Head of caudate nucleus (tissue), 42 donors: ENCODE measurements at regions of chr2 and their contacts with region 1.

Region 1: GRCh38 chr2:189661148-189661956 is at the start of gene ASNSD1:
- DNase-seq: peak; percentile 86 to 97 (median 94)

Region 2: DNA sequence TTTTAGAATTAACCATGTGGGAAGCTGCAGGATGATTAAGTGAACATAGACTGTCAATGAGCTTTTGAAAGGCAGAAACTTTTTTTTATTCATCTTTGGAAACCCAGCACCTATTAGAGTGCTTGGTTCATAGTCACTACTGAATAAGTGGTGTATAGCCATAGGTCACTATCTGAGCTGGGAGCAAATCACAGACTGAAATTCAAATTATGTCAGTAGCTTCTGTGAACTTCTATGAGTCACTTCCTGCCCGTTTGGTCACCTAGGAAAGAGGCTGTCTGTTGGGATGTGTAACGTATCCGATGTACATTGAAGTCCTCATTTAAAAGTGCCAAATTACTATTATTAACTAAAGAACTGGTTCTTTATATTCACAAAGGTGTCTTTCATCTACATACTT is 60.3 kb before region 1 on chr2:
- intact Hi-C with region 1: no loop called
- DNase-seq: no peak

Region 3: DNA sequence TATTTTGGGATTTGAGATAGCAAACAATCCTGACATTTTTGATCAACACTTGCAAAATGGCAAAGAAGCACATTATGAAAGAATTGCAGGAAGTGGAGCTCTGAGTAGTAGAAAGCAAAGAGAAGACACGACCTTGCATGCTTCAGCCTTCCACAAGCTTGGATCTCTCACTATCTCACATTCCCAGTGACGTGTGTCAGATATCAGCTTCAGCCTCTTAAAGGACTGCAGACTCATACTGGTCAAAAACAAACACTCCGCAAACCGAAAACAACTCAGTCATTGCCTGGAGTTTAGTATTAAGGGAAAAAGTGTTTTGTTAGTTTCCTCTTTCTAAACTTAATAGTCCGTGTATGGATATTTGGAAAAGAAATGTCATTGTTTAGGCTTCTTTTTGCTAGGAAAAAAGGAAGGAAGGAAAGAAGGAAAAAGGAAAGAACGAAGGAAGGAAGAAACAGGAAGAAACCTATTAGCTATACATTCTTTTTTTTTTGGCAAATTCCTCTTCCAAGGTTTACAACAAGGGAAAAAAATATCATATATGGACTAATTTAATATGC is 48.2 kb before region 1 on chr2:
- intact Hi-C with region 1: no loop called
- DNase-seq: no peak

Region 4: GRCh38 chr2:189698020-189698887 is 36.9 kb after region 1 on chr2:
- intact Hi-C with region 1: loop called (anchors 2 kb)
- DNase-seq: peak in 18 of 42 donors; percentile 4 to 78 (median 36)

Region 5: GRCh38 chr2:189762551-189763298 is 101.4 kb after region 1 on chr2 and contains the start of gene OSGEPL1:
- intact Hi-C with region 1: loop called (anchors 5 kb)
- DNase-seq: peak; percentile 93 to 98 (median 97)

Region 6: DNA sequence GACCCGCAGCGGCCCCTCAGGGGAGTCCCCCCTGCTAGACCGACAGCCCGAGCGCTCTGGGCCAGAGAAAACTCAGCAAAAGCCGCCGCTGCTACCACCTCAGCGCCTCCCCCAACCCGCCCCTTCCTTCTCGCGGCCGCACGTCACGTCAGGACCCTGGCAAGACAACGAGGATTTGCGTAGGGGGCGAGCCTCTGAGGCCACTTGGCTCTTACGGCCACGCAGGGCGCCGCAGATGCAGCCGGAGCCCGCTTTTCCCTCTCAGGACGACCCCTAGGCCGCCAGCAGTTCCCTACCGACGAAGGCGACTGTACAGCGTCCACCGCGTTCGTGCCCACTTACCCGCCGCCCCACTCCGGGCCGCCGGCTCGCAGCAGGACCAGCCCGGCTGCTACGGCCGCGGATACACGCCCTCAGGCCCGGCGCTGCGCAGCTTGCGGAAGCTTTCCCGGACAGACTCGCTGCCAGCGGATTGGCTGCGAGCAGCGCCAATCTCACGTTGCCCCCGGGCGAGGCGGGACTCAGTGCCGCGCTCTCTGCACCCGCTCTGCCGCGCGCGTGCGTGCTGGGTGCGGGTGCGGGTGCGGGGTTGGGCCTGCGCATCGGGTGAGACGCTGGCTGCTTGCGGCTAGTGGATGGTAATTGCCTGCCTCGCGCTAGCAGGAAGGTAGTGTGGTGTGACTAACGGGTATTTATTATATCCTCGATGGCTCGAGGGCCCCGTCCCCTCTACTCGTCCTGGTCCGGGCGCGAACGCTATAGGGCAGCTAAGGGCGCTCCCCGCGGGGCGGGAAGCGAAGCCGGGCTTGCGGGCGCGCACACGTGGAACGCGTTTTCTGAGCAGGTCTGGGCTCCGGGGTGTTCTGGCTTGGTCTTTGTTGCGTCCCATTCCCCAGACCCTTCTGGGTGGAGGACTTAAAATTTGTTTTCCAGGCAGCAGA is 122.8 kb after region 1 on chr2 and contains the starts of genes ORMDL1 and PMS1:
- intact Hi-C with region 1: loop called (anchors 5 kb)
- DNase-seq: peak; percentile 90 to 99 (median 97)

Region 7: GRCh38 chr2:189836657-189837056 is 175.3 kb after region 1 on chr2:
- intact Hi-C with region 1: no loop called
- DNase-seq: no peak